ENCODE measurements at regions of chr6 and their contacts with region 1.

Region 1: DNA sequence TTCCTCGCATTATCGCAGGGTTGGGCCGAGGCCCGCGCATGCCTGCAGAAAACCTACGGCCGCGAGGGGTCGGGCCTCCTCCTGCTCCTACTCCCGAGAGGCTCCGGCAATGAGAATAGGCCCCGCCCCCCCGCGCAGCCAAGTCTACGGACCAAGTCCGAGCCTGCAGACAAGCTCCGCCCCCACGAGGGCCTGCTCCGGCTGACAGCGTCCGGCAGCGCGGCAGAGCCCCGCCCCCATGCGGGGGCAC is 3.1 kb upstream of the GPSM3 start:
- DNase-seq: peak; percentile 100
- H3K4me3 ChIP-seq: peak overlapping the region in 3 of 4 experiments; percentile 66 to 97 (median 79); a peak in 6 of 8 replicates
- H3K27ac ChIP-seq: peak overlapping the region; percentile 86; the same call in 1 of the 2 replicates
- H3K4me1 ChIP-seq: peaks cover 8 to 40% (median 24%) of the 10 kb centered on the region in 4 experiments
- H3K27me3 ChIP-seq: no peaks in the 10 kb centered on the region
- CTCF ChIP-seq: peak in 2 of 3 experiments; percentile 21 to 66; a peak in 2 of 4 replicates
- EP300 ChIP-seq: no peak
- POLR2A ChIP-seq: no peak; a peak in 1 of 3 replicates
- RAD21 ChIP-seq: peak in 1 of 2 experiments; percentile 37; a peak in 2 of 4 replicates

Region 2: DNA sequence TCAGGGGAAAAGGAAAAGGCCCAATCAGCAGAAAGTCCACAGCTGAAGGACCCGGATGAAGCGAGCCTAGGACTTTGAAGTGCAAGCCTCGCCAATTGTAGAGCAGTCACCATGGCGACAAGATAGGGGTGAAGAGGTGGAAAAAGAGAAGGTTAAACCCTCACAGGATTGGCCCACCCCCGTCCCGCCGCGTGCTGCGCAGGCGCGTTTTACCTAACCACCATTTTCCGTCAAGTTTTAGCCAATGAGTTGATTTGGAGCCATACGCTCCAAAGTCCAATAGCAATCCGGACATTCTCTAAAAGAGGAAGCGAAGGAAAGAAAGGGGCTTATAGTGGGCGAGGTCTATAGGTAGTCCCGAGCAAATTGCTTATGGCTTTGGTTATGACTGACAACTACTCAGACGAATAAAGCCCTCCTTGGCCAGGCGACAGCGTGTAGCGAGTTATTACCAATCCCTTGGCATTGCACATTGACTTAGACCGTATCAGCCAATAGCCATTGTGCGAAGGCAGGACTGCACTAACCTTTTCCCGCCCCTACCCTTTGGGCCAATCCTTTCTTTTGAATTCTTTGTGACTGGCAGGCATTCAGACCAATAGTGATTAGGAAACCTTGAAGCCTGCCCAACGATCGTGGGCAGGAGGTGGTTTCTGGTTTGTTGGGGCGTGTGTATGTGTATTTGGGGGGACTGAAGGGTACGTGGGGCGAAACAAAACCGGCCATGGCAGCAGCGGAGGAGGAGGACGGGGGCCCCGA is 17.6 kb before region 1 on chr6 and contains the start of gene RNF5:
- CTCF ChIA-PET with region 1: interaction called, 7 read pairs
- POLR2A ChIA-PET with region 1: interaction called, 194 read pairs
- DNase-seq: peak; percentile 82 to 91
- H3K4me3 ChIP-seq: peak within 1 kb of the TSS; percentile 91 to 99 (median 95)
- H3K27ac ChIP-seq: peak within 1 kb of the TSS; percentile 95
- H3K4me1 ChIP-seq: peaks cover 5 to 20% (median 9%) of the 10 kb centered on the region in 4 experiments; a peak in 6 of 7 replicates
- H3K27me3 ChIP-seq: no peaks in the 10 kb centered on the region; a peak in 1 of 7 replicates
- CTCF ChIP-seq: no peak
- EP300 ChIP-seq: no peak
- POLR2A ChIP-seq: peak in 1 of 2 experiments; percentile 71; a peak in 1 of 3 replicates
- RAD21 ChIP-seq: no peak
- total RNA-seq, gene RNF5: 90.0 and 90.3 TPM in 2 replicates